Activated CD4-positive, alpha-beta memory T cell treated with anti-CD3 and anti-CD28 coated beads for 36 hours (primary cell): ENCODE measurements at regions of chr18 and their contacts with region 1.

Region 1: DNA sequence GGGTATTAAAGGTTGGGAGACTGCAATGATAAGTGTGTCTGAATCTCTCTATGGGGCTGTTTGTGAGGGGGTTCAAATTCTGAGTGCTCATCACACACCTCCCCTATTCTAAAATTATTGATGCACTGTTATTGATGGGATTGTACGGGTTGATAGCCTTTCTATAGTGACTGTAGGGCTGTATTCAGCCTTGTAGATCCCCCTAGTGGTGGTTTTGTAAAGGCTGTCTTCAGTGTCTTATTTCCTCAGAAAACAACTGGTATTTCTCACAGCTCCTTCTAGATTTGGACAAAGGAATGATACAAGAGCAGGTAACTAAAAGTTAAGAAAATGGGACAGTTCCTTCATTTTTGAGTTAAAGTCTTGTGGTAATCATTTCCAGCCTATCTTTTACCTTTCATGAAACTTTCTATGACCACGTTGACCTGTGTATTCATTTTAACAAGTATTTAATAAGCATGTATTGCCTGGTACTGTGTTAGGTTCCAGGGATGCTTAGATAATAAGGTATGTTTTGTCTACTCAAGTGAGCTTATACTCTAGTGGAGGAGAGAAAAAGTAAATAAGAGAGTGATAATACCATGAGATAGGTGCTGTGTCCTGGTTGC is 21.2 kb downstream of the SMAD4 start:
- DNase-seq: no peak
- H3K4me3 Mint-ChIP-seq: no peak overlapping the region
- H3K27ac Mint-ChIP-seq: peak overlapping the region; percentile 49
- H3K4me1 Mint-ChIP-seq: peaks cover 39% of the 10 kb centered on the region
- H3K27me3 Mint-ChIP-seq: no peaks in the 10 kb centered on the region

Region 2: GRCh38 chr18:50967714-50968661 is 83.2 kb before region 1 on chr18 and contains the start of gene ELAC1:
- CTCF ChIA-PET with region 1: no interaction called
- POLR2A ChIA-PET with region 1: no interaction called
- intact Hi-C with region 1: loop called (anchors 2 kb)
- DNase-seq: peak; percentile 71
- H3K4me3 Mint-ChIP-seq: peak within 1 kb of the TSS; percentile 96
- H3K27ac Mint-ChIP-seq: peak within 1 kb of the TSS; percentile 94
- H3K4me1 Mint-ChIP-seq: peaks cover 26% of the 10 kb centered on the region
- H3K27me3 Mint-ChIP-seq: no peaks in the 10 kb centered on the region
- total RNA-seq, gene ELAC1: 4.7 to 5.9 TPM

Region 3: GRCh38 chr18:51039138-51040112 is 11.8 kb before region 1 on chr18:
- CTCF ChIA-PET with region 1: interaction called, 57 read pairs
- POLR2A ChIA-PET with region 1: no interaction called
- intact Hi-C with region 1: no loop called
- DNase-seq: peak; percentile 16
- H3K4me3 Mint-ChIP-seq: no peak overlapping the region
- H3K27ac Mint-ChIP-seq: no peak overlapping the region
- H3K4me1 Mint-ChIP-seq: peaks cover 89% of the 10 kb centered on the region
- H3K27me3 Mint-ChIP-seq: no peaks in the 10 kb centered on the region